Panc1 (cell line): ENCODE measurements at regions of chr10 and their contacts with region 1.

Region 1: GRCh38 chr10:49242604-49243003 is 54.4 kb upstream of the TMEM273 start:
- DNase-seq: no peak
- ATAC-seq: no peak
- H3K4me3 ChIP-seq: no peak overlapping the region
- H3K27ac ChIP-seq: no peak overlapping the region
- H3K4me1 ChIP-seq: no peaks in the 10 kb centered on the region
- H3K27me3 ChIP-seq: peaks cover 20% of the 10 kb centered on the region
- CTCF ChIP-seq: no peak

Region 2: DNA sequence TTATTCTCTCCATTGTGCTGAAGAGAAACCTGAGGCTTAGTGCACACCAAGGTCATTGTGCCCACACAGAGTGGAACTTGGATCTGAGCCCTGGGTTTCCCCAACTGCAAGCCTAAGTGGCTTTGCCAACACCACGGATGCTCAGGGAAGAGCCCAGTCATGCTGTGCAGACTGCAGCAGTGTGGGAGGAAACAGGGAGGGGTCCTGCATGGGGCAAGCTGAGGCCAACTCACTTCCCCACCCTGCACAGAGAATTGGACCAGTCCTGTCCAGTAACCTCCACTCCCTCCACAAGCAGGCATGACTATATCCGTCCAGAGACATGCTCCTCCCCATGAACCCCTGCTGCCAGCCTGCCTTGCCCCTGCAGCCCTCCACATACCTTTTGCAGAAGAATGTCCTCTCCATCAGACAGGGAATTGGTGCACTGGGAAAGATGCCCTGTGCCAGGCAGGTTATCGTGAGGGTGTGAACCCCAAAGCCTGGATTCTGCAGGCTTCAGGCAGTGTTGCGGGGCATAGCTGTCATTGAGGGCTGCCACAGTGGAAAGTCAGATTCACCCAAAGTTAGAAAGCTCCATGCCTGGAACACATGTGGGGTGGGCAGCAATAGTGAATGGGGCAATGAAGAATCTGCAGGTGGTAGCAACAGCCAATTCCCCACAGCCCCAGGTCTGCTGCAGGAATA is 108.4 kb after region 1 on chr10:
- CTCF ChIA-PET with region 1: no interaction called
- POLR2A ChIA-PET with region 1: no interaction called
- in situ Hi-C with region 1: no loop called
- intact Hi-C with region 1: no loop called
- DNase-seq: no peak
- ATAC-seq: no peak
- H3K4me3 ChIP-seq: no peak overlapping the region
- H3K27ac ChIP-seq: no peak overlapping the region
- H3K4me1 ChIP-seq: no peaks in the 10 kb centered on the region
- H3K27me3 ChIP-seq: no peaks in the 10 kb centered on the region
- CTCF ChIP-seq: no peak

Region 3: DNA sequence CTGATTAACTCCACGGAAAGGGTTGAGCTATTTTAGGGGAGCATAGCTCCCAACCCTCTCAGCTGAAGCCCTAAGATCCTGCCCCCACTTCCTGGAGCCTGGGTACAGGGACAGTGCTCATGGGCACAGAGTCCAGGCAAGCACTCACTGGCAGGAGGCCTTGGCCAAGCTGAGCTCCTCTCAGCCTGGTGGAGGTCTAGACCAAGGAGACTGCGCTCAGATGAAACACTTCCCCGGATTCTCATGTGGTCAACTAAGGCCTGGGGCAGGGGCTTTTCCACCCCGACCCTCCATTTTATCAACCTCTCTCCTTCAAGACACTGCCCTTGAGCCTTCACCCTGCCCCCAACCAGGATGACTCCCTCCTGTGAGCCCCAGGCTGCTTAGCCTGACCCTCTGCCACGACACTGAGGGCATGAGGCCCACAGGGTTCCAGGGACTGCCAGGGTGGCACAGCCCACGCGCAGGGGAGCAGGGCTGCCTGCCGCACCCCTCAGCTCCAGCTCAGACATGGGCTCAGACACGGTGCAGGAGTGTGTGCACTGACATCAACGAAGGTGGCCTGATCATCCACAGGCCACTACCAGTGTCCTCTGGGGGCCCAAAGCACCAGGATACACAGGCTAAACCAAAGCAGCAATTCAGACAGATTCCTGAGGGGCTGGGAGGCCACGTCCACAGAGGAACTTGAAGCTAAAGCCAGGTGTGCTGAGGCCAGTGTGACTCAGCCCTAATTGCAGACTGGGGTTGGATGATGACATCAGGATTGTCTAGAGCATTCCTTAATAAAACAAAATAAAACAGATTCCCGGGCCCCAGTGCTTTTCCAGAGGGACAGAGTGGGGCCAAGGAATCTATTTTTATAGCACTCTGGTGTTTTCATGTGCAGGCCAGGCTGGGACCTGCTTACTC is 390.1 kb after region 1 on chr10:
- CTCF ChIA-PET with region 1: no interaction called
- POLR2A ChIA-PET with region 1: no interaction called
- in situ Hi-C with region 1: no loop called
- intact Hi-C with region 1: no loop called
- DNase-seq: no peak
- ATAC-seq: no peak; the same call in 1 of the 2 replicates
- H3K4me3 ChIP-seq: no peak overlapping the region
- H3K27ac ChIP-seq: no peak overlapping the region
- H3K4me1 ChIP-seq: no peaks in the 10 kb centered on the region
- H3K27me3 ChIP-seq: peaks cover 6% of the 10 kb centered on the region
- CTCF ChIP-seq: no peak

Region 4: DNA sequence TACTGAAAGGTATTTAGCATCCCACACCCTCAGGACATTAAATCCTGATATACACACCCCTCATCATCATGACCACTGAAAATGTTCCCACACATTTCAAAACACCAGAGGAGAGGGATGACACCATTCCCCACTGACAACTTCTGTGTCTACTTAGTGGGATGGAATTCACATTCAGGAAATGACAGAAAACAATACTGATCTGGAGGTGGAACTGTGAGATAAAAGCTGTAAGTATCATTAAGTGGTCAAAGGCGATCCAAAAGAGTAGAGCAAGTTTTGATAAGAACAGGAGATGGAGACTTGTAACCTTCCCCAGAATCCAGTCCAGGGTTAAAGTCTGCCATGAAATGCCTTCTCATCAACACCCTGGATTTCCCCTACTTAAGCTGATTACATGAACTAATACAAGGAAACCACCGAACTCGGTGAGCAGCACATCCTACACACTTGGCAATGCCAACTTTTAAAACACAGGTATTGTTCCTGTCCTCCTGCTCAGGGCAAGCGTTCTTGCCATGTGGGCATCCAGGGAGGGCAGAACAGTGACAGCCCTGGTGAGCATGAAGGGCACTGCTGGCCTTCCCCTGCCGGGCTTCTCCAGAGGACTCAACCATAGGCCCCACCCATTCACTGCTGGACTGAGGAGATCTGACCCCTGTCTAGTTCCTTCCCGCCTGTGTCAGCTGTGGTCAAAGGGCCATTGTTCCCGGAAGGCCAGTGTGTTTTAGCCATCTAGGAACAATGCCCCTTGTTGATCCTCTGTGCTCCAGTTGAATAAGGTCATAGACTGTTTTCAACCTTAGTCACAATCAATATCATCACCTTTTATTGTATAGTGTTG is 1296.2 kb after region 1 on chr10:
- CTCF ChIA-PET with region 1: no interaction called
- POLR2A ChIA-PET with region 1: interaction called, 10 read pairs
- in situ Hi-C with region 1: no loop called
- intact Hi-C with region 1: no loop called
- DNase-seq: no peak
- ATAC-seq: peak; percentile 83
- H3K4me3 ChIP-seq: no peak overlapping the region
- H3K27ac ChIP-seq: no peak overlapping the region
- H3K4me1 ChIP-seq: no peaks in the 10 kb centered on the region
- H3K27me3 ChIP-seq: no peaks in the 10 kb centered on the region
- CTCF ChIP-seq: no peak